ENCODE measurements at regions of chr10 and their contacts with region 1.

Region 1: DNA sequence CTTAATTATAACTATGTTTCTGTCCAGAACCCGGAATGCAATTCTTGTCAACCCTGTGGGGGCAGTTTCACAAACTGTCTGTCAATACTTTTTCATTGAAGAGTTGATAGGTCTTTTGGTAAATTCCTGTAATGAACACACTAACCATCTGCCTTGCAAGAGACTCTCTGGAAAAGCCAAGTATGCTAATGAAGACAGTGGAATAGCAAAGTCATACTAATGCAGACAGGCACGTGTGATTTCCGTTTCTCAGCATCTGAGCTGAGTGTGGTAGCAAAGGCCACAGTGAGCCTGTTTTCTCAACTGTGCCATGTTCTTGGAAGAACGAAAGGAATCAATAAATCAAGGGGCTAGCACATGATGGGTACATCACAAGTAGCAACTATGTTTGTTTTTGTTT is 494.1 kb upstream of the NRP1 start:
- DNase-seq: no peak
- ATAC-seq: no peak
- H3K4me3 ChIP-seq: no peak overlapping the region
- H3K4me3 Mint-ChIP-seq: no peak overlapping the region
- H3K27ac ChIP-seq: no peak overlapping the region
- H3K27ac Mint-ChIP-seq: no peak overlapping the region
- H3K4me1 ChIP-seq: no peaks in the 10 kb centered on the region
- H3K4me1 Mint-ChIP-seq: no peaks in the 10 kb centered on the region
- H3K27me3 ChIP-seq: no peaks in the 10 kb centered on the region
- H3K27me3 Mint-ChIP-seq: no peaks in the 10 kb centered on the region
- CTCF ChIP-seq: no peak

Region 2: DNA sequence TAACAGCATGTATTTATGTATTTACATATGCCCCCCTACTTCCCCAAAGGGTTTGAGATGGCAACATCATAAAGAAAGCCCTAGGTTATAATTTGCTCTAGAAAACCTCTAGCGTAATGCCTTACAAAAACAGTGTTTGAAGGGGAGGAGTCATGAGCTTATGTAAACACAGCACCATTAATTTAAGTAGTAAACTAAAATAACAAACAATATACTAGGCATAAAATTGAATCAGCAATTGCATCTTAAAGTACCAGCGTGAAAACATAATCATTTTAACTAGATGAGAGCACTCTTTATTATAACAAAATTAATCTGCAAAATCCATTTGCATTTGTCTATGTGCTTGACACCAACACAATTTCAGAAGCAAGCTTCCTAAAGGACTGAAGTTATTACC is 13.1 kb after region 1 on chr10:
- CTCF ChIA-PET with region 1: no interaction called
- POLR2A ChIA-PET with region 1: no interaction called
- intact Hi-C with region 1: no loop called
- DNase-seq: no peak
- ATAC-seq: no peak
- H3K4me3 ChIP-seq: no peak overlapping the region
- H3K4me3 Mint-ChIP-seq: no peak overlapping the region
- H3K27ac ChIP-seq: no peak overlapping the region
- H3K27ac Mint-ChIP-seq: no peak overlapping the region
- H3K4me1 ChIP-seq: no peaks in the 10 kb centered on the region
- H3K4me1 Mint-ChIP-seq: no peaks in the 10 kb centered on the region
- H3K27me3 ChIP-seq: no peaks in the 10 kb centered on the region
- H3K27me3 Mint-ChIP-seq: no peaks in the 10 kb centered on the region
- CTCF ChIP-seq: no peak

Region 3: DNA sequence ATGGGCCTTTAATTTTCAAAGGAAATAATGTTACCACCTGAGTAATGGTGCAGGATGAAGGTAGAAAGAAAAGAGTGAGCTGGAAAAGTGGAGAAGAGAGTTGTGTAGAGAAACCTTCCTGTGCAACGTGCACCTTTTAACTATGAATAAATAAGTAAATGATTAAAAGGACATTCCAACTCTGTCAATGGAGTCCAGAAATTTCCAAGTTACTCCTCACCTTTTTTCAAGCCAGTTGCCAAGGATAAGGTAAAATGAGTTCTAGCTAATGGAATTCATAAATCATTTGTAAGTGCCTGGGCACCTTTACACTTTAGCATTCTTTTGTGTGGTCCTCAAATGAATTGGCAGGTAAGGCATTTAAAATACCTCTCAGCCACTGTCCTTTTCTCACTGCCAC is 55.3 kb after region 1 on chr10:
- CTCF ChIA-PET with region 1: no interaction called
- POLR2A ChIA-PET with region 1: no interaction called
- intact Hi-C with region 1: loop called (anchors 2 kb)
- DNase-seq: no peak
- ATAC-seq: no peak
- H3K4me3 ChIP-seq: no peak overlapping the region
- H3K4me3 Mint-ChIP-seq: no peak overlapping the region
- H3K27ac ChIP-seq: no peak overlapping the region
- H3K27ac Mint-ChIP-seq: no peak overlapping the region
- H3K4me1 ChIP-seq: no peaks in the 10 kb centered on the region
- H3K4me1 Mint-ChIP-seq: no peaks in the 10 kb centered on the region
- H3K27me3 ChIP-seq: no peaks in the 10 kb centered on the region
- H3K27me3 Mint-ChIP-seq: no peaks in the 10 kb centered on the region
- CTCF ChIP-seq: no peak

Measured in B cell (primary cell).